Dorsolateral prefrontal cortex (tissue), 120 donors: ENCODE measurements at regions of chr5 and their contacts with region 1.

Region 1: GRCh38 chr5:137461391-137462264 is 37.5 kb downstream of the SPOCK1 start:
- DNase-seq: no peak
- H3K4me3 ChIP-seq: peak overlapping the region in 24 of 59 donors; percentile 0 to 45 (median 24)
- H3K27ac ChIP-seq: peak overlapping the region; percentile 53 to 100 (median 96)
- H3K27me3 ChIP-seq: no peaks in the 10 kb centered on the region
- CTCF ChIP-seq: peak in 31 of 56 donors; percentile 8 to 58 (median 36)

Region 2: GRCh38 chr5:137344723-137345322 is 116.8 kb before region 1 on chr5:
- intact Hi-C with region 1: loop called (anchors 2 to 10 kb)
- DNase-seq: peak in 2 of 10 donors; percentile 64 to 69
- H3K4me3 ChIP-seq: no peak overlapping the region
- H3K27ac ChIP-seq: peak overlapping the region in 45 of 59 donors; percentile 1 to 81 (median 58)
- H3K27me3 ChIP-seq: no peaks in the 10 kb centered on the region
- CTCF ChIP-seq: peak; percentile 59 to 89 (median 75)

Region 3: DNA sequence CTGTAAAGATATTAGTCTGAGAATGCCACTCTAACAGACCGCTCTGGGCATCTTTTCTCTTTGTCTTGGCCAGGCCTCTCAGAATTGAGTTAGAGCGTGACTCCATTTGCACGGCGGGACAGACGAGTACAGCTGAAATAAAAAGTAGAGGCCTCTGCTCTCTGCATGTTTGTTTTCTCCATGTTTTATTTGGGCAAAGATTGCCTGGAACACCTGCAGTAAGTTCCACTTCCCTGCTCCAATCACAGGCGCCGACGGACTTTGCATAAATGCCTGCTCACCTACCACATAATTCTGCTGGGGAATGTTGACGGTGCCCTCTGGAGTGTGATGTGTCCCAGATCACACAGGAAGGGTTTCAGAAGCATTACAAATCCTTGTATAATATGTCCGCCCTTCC is 26.9 kb after region 1 on chr5:
- intact Hi-C with region 1: loop called in 1 of 2 experiments (anchors 2 kb)
- DNase-seq: no peak
- H3K4me3 ChIP-seq: no peak overlapping the region
- H3K27ac ChIP-seq: peak overlapping the region in 58 of 59 donors; percentile 58 to 93 (median 86)
- H3K27me3 ChIP-seq: no peaks in the 10 kb centered on the region
- CTCF ChIP-seq: peak in 1 of 56 donors; percentile 18